ENCODE measurements at regions of chr17 and their contacts with region 1.

Region 1: DNA sequence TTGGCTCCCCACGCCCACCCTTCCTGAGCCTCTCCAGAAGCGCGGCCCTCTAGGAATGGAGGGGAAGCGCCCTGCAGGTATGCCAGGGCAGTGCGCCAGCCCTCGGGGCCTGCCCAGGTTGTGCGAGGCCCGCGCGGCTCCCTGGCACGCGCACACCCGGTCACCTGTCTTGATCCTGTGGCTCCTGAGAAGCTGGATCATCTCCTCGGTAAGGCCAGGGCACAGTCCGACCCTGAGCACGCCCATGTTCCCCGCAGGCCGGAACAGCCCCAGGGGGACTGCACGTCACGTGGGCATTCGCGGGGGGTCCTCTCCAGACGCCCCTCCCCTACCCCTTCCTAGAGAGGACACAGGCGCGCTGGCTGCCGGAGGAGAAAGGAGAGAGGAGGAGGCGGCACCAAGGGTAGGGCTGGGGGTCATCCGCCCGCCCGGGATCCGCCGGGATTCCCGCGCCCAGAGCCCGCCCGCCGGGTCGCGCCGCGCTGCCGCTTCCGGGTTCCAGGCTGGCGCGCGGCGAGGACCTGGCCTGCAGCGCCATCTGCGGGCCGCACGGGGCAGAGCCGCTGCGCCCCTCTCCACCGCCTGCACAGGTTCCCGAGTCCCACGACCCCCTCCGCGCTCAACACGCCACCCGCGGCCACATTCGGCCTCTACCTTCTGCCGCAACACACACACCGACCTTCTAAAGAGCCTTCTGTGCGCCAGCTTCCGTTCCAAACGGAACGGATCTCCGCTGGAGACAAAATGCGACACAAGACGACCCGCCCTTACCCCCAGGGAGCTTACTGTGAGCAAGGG is at the start of gene RAD51D:
- DNase-seq: peak; percentile 57 to 77
- H3K4me3 ChIP-seq: peak within 1 kb of the TSS; percentile 66 to 73
- H3K27ac ChIP-seq: peak within 1 kb of the TSS; percentile 61 to 71
- H3K4me1 ChIP-seq: peaks cover 3 to 20% (median 13%) of the 10 kb centered on the region in 4 donors
- H3K27me3 ChIP-seq: no peaks in the 10 kb centered on the region
- CTCF ChIP-seq: peak; percentile 90 to 96

Region 2: DNA sequence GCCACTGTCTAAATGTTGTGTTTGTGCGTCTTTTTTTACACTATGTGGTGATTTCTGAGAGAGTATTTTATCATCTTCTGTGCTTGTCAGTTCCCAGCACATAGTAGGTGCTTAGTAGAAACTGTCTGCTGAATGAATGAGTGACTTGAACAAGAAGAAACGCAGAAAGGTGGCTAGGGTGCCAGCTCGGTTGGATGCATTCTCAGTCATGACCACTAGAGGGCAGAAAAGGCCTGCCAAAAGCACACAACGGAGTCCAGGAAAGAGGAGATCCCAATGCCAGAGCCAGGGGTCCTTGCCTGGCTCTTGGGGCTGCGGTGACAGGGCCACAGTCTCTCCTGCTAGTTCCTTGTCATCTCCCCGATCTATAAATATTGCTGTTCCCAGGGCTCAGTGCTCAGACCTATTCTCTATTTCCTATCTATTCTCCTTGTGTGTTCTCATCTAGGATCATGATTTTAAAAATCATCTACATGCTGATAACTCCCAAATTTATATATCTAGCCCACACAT is 699.3 kb before region 1 on chr17:
- intact Hi-C with region 1: loop called (anchors 5 kb)
- DNase-seq: peak in 1 of 2 donors; percentile 59
- H3K4me3 ChIP-seq: no peak overlapping the region
- H3K27ac ChIP-seq: no peak overlapping the region
- H3K4me1 ChIP-seq: no peaks in the 10 kb centered on the region
- H3K27me3 ChIP-seq: peaks cover 0 to 70% of the 10 kb centered on the region in 2 donors
- CTCF ChIP-seq: peak; percentile 89 to 92

Region 3: DNA sequence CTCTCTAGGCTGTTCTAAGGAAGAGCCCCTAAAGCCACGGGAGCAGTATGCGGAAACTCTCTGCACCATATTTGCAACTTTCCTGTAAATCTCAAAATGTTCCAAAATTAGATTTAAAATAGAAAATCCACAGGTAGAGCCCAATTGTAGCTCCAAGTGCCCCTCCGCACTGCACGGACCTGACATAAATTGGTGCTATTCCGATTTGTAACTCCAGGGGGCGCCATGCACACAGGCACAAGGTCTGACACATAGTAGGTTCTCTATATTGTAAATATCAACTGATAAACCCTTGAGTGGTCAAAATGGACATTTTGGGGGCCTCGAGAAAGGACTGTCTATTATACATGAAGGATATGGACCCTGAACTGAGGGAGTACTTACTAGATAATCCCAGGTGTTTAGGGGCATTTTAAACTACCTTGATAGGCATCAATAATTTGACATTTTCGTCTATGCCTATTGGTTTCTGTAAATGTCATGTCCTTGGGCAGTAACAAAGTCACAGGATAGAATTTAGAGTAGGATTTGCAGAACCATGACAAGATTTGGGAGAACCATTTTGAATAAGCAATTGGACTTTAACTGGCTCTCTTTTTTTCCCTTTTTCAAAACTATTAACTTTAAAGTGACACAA is 576.7 kb before region 1 on chr17:
- intact Hi-C with region 1: loop called (anchors 5 kb)
- DNase-seq: no peak
- H3K4me3 ChIP-seq: no peak overlapping the region
- H3K27ac ChIP-seq: no peak overlapping the region
- H3K4me1 ChIP-seq: no peaks in the 10 kb centered on the region
- H3K27me3 ChIP-seq: peaks cover 0 to 38% of the 10 kb centered on the region in 2 donors
- CTCF ChIP-seq: peak; percentile 71 to 73

Region 4: DNA sequence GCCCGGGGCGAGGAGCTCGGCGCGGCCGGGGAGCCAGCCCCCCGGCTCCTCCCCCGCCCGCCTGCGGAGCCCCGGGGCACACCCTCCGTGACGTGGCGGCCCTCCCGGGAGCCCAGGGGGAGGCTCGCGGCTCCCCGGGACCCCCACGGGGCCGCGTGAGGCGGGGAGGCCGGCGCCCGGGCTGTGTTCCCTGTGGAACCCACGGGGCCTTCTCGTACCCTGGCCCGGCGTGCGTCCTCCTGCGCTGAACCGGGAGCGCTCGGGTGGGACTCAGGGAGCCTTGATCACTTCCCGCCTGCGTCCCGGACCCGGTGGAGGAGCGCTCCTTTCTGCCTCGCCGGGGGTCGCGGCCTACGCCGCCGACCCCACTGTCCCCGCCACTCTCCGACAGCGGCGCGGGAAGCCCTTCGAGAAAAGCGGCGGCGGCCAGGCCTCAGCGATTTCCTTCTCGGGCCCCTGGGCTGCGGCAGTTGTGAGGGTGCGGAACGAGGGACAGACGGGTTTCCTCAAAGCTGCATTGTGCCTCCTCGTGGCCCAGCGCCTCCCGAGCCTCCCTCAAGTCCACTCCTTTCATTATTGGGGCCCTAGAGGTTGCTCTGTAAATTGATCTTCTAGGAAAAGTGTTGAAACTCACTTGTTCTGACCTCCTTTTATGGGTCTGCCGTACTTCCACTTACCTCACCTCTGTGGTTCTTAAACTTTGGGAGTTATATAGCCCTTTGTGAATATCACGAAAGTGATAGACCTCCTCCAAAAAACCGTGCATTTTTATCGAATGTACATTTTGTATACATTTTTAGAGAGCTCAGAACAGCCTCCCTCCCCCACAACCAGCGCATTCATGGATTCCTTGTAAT is 138.7 kb before region 1 on chr17:
- intact Hi-C with region 1: loop called (anchors 10 kb)
- DNase-seq: peak; percentile 75 to 84
- H3K4me3 ChIP-seq: peak overlapping the region; percentile 86 to 92
- H3K27ac ChIP-seq: peak overlapping the region; percentile 97 to 99
- H3K4me1 ChIP-seq: peaks cover 0 to 30% (median 18%) of the 10 kb centered on the region in 4 donors
- H3K27me3 ChIP-seq: no peaks in the 10 kb centered on the region
- CTCF ChIP-seq: peak; percentile 33 to 37

Measured in tibial artery (tissue), 4 donors.